ENCODE measurements at regions of chr15 and their contacts with region 1.

Region 1: GRCh38 chr15:79184465-79184892 is 93.9 kb upstream of the RASGRF1 start:
- DNase-seq: peak; percentile 76
- H3K27ac ChIP-seq: no peak overlapping the region
- CTCF ChIP-seq: peak; percentile 98

Region 2: DNA sequence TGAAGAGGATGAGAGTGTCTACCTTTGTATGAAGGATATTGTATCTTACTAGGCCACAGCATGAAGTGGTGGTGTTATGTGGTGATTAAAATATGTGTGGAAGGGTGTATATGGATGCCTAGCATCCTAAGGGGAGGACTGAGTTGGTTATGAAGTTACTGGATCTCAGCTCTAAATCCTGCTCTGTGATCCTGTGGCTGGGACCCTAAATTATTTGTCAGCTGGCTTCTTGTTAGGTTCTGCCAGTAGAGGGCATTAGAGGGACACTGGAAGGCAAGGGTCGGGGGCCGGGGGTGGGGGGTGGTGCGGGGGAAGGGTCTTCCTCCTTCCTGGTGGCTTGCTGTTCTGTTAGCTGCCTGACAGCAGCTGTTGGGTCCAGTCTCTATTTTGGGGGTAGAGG is 276.9 kb before region 1 on chr15:
- CTCF ChIA-PET with region 1: interaction called, 10 read pairs
- POLR2A ChIA-PET with region 1: no interaction called
- DNase-seq: no peak
- H3K27ac ChIP-seq: no peak overlapping the region
- CTCF ChIP-seq: peak; percentile 32

Region 3: DNA sequence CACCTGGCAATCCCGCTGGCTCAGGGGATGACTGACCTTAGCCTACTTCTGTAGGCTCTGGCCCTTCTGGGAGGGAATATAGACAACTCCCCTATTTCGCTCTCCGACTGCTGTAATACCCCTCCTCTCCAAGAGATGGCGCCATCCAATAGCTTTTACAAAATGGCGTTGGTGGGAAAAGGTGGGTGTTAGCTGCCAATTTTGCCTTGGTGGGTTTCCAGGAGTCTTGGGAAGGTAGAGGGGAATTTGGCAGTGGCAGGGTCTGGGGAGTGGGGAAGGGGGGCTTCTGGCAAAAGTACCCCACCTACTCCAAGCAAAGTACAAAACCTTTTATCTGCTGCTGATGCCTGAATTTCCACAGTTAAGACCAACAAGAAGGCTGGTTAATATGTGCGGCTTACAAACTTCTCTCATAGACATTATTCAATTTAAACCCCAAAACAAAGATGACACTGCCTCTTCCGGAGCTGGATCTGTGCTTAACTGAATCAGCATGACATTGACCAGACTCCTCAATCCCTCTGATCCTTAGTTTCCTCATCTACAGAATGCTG is 156.0 kb before region 1 on chr15:
- CTCF ChIA-PET with region 1: interaction called, 56 read pairs
- POLR2A ChIA-PET with region 1: no interaction called
- DNase-seq: peak; percentile 54
- H3K27ac ChIP-seq: no peak overlapping the region
- CTCF ChIP-seq: peak; percentile 89

Measured in RWPE1 (cell line).